Activated CD4-positive, alpha-beta memory T cell treated with anti-CD3 and anti-CD28 coated beads, Interleukin-2, amount 10 ng/mL, durations not matched to agents 7 days and 5 days (primary cell): ENCODE measurements at regions of chr18 and their contacts with region 1.

Region 1: GRCh38 chr18:48445540-48445939 is 36.4 kb upstream of the ZBTB7C start:
- DNase-seq: peak; percentile 77
- H3K4me3 Mint-ChIP-seq: no peak overlapping the region
- H3K27ac Mint-ChIP-seq: no peak overlapping the region
- H3K4me1 Mint-ChIP-seq: peaks cover 7% of the 10 kb centered on the region
- H3K27me3 Mint-ChIP-seq: peaks cover 41% of the 10 kb centered on the region

Region 2: GRCh38 chr18:48030616-48031480 is 414.7 kb before region 1 on chr18:
- CTCF ChIA-PET with region 1: interaction called, 20 read pairs
- POLR2A ChIA-PET with region 1: no interaction called
- DNase-seq: peak; percentile 32
- H3K4me3 Mint-ChIP-seq: no peak overlapping the region
- H3K27ac Mint-ChIP-seq: no peak overlapping the region
- H3K4me1 Mint-ChIP-seq: peaks cover 2% of the 10 kb centered on the region
- H3K27me3 Mint-ChIP-seq: no peaks in the 10 kb centered on the region

Region 3: DNA sequence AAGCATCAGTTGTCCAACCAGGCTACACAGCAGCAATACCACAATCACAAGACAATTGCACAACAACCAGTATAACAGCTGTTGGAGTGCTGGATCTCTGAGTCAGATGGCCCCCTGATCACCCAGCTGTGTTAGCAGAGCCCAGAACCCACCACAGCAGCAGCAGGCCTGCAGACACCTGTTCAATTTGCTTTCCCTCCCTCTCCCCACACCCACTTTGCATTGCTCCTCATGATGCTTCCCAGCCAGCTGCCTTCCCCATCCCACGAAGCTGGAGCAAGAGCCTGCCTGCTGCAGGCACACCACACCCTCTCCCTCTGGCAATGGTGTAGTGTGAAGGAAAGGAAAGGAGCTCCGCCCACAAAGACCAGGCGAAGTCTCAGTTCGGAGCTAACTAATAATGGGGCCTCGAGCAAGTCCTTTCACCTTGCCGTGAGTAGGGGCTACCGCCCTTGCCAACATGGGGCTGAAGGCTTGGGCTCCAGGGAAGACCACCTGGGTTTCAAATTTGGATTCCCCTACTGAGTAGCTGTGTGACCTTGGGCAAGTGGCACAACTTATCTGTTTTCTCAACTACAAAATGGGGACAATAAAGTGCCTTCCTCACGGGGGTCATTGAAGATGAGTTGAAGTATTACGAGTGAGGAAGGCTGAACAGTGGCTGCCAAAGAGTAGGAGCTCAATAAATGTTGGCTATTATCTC is 16.9 kb before region 1 on chr18:
- CTCF ChIA-PET with region 1: interaction called, 10 read pairs
- POLR2A ChIA-PET with region 1: no interaction called
- DNase-seq: no peak
- H3K4me3 Mint-ChIP-seq: no peak overlapping the region
- H3K27ac Mint-ChIP-seq: no peak overlapping the region
- H3K4me1 Mint-ChIP-seq: no peaks in the 10 kb centered on the region
- H3K27me3 Mint-ChIP-seq: peaks cover 60% of the 10 kb centered on the region

Region 4: DNA sequence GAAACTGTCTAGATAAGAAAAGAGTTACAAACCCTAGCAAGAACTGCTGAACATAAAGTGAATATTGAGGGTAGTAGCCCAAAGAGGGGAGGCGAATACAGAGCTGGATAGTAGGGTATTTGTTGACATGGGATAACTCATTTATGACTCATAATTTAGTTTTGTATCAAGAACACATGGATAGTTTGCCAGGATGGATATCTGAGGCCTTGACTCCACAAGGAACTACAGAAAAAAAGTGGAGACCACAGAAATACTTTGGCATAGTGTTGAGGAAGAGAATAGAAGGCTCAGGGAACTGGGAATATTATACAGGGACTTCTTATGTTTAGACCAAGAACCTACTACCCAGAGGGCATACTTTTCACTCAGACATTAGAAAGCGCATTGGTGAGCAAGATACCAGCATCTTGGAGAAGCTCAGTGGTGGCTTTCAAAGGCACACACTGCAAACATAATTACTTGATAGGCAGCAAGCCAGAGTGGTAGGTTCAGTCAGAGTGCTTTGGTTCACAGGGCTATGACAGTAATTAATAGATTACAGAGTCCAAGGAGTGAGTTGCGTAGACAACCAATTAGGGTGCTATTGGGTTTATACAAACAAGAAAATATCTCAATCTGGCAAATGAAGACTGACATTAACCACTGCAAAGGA is 15.5 kb after region 1 on chr18:
- CTCF ChIA-PET with region 1: interaction called, 33 read pairs
- POLR2A ChIA-PET with region 1: interaction called, 3 read pairs
- DNase-seq: no peak
- H3K4me3 Mint-ChIP-seq: no peak overlapping the region
- H3K27ac Mint-ChIP-seq: no peak overlapping the region
- H3K4me1 Mint-ChIP-seq: peaks cover 9% of the 10 kb centered on the region
- H3K27me3 Mint-ChIP-seq: peaks cover 51% of the 10 kb centered on the region

Region 5: DNA sequence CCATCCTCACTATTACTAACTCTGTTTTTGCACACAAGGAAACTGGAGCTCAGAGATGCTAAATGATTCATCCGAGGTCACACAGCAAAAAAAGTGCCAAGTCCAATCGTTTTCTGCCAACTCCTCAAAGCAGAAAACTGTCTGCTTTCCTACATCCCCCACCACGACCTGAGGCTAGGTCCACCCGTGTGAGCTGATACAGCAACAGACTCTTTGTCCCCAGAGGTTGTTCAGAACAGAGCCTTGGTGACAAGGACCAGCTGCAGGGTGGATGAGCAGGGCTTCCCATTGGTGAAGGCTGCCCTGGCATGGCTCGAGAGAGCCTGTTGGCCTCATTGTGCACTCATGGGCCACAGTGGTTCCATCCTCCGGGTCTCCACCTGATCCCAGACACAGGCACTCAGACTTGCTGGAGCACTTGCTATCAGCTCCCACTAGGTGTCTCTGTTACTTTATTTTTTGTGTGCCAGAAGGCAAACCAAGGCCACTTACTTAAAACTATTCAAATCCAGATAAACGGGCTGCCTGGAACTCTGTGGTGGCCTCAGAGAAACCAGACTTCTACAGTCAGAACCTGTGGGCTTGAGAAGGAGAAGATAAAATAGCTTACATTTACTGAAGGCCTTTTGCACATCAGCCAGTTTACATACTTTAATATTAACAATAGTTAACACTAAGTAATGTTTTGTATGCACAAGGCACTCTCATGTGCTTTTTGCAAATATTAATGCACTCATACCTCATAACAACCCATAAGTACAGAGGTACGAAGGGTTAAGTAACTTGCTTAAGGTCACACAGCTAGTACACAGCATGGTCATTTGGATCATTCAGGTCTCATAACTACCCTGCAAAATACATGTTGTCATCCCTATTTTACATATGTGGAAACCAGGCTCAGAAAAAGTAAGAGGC is 30.4 kb after region 1 on chr18:
- CTCF ChIA-PET with region 1: interaction called, 12 read pairs
- POLR2A ChIA-PET with region 1: no interaction called
- DNase-seq: peak; percentile 29
- H3K4me3 Mint-ChIP-seq: no peak overlapping the region
- H3K27ac Mint-ChIP-seq: no peak overlapping the region
- H3K4me1 Mint-ChIP-seq: no peaks in the 10 kb centered on the region
- H3K27me3 Mint-ChIP-seq: peaks cover 44% of the 10 kb centered on the region